ENCODE measurements at regions of chr10 and their contacts with region 1.

Region 1: GRCh38 chr10:58773341-58773740 is 260.7 kb downstream of the BICC1 start:
- DNase-seq: no peak
- H3K4me3 ChIP-seq: no peak overlapping the region
- H3K27ac ChIP-seq: no peak overlapping the region
- H3K4me1 ChIP-seq: no peaks in the 10 kb centered on the region
- H3K27me3 ChIP-seq: no peaks in the 10 kb centered on the region
- CTCF ChIP-seq: no peak
- POLR2A ChIP-seq: no peak

Region 2: GRCh38 chr10:58796242-58796641 is 22.9 kb after region 1 on chr10:
- intact Hi-C with region 1: loop called (anchors 1 kb)
- DNase-seq: no peak
- H3K4me3 ChIP-seq: no peak overlapping the region
- H3K27ac ChIP-seq: no peak overlapping the region
- H3K4me1 ChIP-seq: no peaks in the 10 kb centered on the region
- H3K27me3 ChIP-seq: no peaks in the 10 kb centered on the region
- CTCF ChIP-seq: no peak
- POLR2A ChIP-seq: no peak

Region 3: GRCh38 chr10:58856508-58857240 is 83.3 kb after region 1 on chr10:
- intact Hi-C with region 1: no loop called
- DNase-seq: no peak
- H3K4me3 ChIP-seq: no peak overlapping the region
- H3K27ac ChIP-seq: peak overlapping the region in 4 of 8 donors; percentile 8 to 54 (median 38)
- H3K4me1 ChIP-seq: no peaks in the 10 kb centered on the region
- H3K27me3 ChIP-seq: no peaks in the 10 kb centered on the region
- CTCF ChIP-seq: no peak
- POLR2A ChIP-seq: no peak

Measured in spleen (tissue), 13 donors.